Activated CD4-positive, alpha-beta memory T cell treated with anti-CD3 and anti-CD28 coated beads, Interleukin-2, amount 10 ng/mL, durations not matched to agents 7 days and 5 days (primary cell): ENCODE measurements at regions of chr3 and their contacts with region 1.

Region 1: DNA sequence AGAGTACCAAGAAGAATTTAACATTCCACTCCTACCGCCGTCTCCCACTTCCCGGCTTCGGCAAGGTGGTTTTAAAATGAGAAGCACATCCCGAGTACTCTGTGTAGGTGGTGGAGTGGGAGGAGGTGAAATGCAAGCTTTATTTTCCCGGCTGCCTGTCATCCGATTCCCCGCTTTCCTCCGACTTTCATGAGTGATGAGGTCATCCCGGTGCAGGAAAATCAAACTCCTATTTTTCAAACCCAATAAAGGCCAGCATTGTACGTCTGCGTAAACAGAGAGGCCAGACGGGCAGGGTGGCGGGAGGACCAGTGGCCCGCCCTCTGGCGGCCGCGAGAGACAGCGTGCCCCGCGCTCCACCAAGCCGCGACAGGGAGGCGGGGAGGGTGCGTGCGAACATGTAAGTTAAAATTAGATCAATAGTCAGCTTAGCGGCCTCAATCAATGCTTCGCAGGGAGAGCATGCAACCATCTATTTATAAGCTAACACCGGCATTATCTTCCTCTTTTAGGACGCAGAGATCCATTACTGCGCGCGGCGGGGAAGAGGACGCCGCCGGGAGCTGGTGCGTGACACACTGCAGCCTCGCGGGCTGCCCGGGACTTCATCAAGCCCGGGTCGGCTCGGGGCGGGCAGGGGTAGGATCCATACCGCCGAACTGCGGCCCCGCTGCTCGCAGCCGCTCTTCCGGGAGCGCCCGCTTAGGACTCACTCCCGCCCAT is 163.3 kb downstream of the CD47 start:
- DNase-seq: peak; percentile 74
- H3K4me3 Mint-ChIP-seq: peak overlapping the region; percentile 76
- H3K27ac Mint-ChIP-seq: no peak overlapping the region
- H3K4me1 Mint-ChIP-seq: peaks cover 11% of the 10 kb centered on the region
- H3K27me3 Mint-ChIP-seq: peaks cover 9% of the 10 kb centered on the region

Region 2: DNA sequence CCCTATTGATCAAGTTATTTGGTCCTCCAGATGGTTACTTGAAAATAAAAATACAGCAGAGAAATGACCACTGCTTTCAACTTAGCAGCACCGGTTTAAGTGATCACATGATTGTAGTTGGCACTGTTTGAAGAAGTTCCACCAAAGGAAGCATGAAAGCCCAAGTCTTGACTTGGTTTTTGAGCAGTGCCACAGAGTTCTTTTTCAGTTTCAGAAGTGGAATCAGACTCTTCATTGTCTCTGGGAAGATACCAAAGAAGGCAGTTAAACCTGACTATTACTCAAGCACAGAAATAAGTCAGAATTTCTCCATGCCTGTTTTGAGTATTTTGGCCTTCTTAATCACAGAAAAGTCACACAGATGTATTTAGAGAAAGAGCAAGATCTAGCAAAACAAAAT is 338.1 kb before region 1 on chr3:
- CTCF ChIA-PET with region 1: no interaction called
- POLR2A ChIA-PET with region 1: no interaction called
- DNase-seq: no peak
- H3K4me3 Mint-ChIP-seq: no peak overlapping the region
- H3K27ac Mint-ChIP-seq: no peak overlapping the region
- H3K4me1 Mint-ChIP-seq: peaks cover 9% of the 10 kb centered on the region
- H3K27me3 Mint-ChIP-seq: no peaks in the 10 kb centered on the region

Region 3: DNA sequence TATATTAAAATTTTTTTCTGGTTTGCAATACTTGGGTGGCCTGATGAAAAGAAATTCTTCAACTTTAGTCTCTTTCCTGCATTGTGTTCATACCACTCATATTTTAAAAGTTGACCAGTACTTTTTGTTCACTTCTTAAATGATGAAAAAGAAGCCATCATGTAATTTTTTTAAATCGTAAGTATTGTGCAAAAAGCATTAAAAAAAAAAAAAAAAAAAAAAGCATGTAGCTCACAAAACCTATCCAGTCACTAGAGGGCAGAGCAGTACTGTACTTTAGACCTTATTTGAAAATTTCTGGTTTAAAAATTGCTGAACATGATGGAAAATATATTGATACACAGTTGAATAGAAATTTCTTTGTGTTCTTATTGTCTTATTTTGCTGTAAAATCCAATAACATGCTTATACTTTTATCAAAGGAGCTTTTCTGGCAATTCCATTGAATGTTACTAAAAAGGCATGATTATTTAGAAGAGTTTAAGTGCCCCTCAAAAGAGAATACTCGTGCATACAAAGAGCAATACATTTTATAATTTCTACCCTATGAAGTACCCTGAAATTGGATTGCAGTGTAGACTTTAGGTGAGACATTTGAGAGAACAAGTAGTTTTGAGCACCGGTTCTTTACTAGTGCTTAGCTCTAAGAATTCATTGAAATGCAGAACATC is 267.1 kb before region 1 on chr3:
- CTCF ChIA-PET with region 1: interaction called, 15 read pairs
- POLR2A ChIA-PET with region 1: no interaction called
- DNase-seq: no peak
- H3K4me3 Mint-ChIP-seq: no peak overlapping the region
- H3K27ac Mint-ChIP-seq: no peak overlapping the region
- H3K4me1 Mint-ChIP-seq: peaks cover 16% of the 10 kb centered on the region
- H3K27me3 Mint-ChIP-seq: no peaks in the 10 kb centered on the region

Region 4: GRCh38 chr3:107816107-107816506 is 111.4 kb before region 1 on chr3:
- CTCF ChIA-PET with region 1: no interaction called
- POLR2A ChIA-PET with region 1: no interaction called
- DNase-seq: no peak
- H3K4me3 Mint-ChIP-seq: no peak overlapping the region
- H3K27ac Mint-ChIP-seq: no peak overlapping the region
- H3K4me1 Mint-ChIP-seq: peaks cover 2% of the 10 kb centered on the region
- H3K27me3 Mint-ChIP-seq: peaks cover 7% of the 10 kb centered on the region

Region 5: GRCh38 chr3:107884719-107885460 is 42.6 kb before region 1 on chr3:
- CTCF ChIA-PET with region 1: no interaction called
- POLR2A ChIA-PET with region 1: no interaction called
- DNase-seq: no peak
- H3K4me3 Mint-ChIP-seq: no peak overlapping the region
- H3K27ac Mint-ChIP-seq: no peak overlapping the region
- H3K4me1 Mint-ChIP-seq: no peaks in the 10 kb centered on the region
- H3K27me3 Mint-ChIP-seq: no peaks in the 10 kb centered on the region

Region 6: GRCh38 chr3:107938143-107938542 is 10.6 kb after region 1 on chr3:
- CTCF ChIA-PET with region 1: interaction called, 15 read pairs
- POLR2A ChIA-PET with region 1: interaction called, 6 read pairs
- DNase-seq: no peak
- H3K4me3 Mint-ChIP-seq: no peak overlapping the region
- H3K27ac Mint-ChIP-seq: no peak overlapping the region
- H3K4me1 Mint-ChIP-seq: peaks cover 18% of the 10 kb centered on the region
- H3K27me3 Mint-ChIP-seq: peaks cover 15% of the 10 kb centered on the region

Region 7: DNA sequence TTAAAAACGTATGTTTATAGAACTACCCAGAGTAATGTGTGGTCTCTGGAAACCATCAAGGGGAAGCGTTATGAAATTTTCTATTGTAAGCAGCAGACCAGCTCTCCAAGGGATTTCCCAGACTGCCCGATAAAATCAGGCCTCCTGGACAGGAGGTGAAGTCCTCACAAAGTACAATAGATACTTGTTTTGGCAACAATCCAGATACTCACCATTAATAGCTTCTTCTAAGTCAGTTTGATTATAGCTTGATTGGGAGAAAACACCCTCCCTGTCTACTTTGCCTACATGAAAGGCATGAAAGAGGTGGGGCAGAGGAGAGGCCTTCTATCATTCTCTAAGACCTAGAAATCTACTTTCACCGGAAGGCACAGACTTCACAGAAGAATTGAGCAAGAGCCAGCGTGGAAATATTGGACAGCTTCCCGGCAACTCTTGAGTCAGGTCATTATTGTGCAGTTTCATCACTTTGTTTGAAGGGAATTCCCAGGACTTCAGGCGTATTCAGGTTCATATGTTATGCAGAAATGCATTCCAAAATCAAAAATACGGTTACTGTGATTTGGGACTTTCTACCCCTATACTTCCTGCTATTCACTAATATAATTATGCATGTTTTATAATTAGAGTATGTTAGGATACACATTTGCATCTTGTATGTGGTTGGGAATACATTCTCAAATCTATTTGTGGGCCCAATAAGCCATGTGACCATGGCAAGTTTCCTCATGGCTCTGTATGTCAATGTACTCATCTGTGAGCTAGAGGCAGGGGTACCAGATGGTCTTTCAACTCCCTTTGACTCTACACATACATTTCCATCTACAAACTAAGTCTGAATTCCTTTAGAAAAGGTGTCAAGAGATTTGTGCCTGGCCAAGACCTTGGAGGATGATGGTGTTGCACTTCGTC is 59.8 kb after region 1 on chr3:
- CTCF ChIA-PET with region 1: interaction called, 18 read pairs
- POLR2A ChIA-PET with region 1: no interaction called
- DNase-seq: no peak
- H3K4me3 Mint-ChIP-seq: no peak overlapping the region
- H3K27ac Mint-ChIP-seq: peak overlapping the region; percentile 89
- H3K4me1 Mint-ChIP-seq: peaks cover 45% of the 10 kb centered on the region
- H3K27me3 Mint-ChIP-seq: no peaks in the 10 kb centered on the region

Region 8: DNA sequence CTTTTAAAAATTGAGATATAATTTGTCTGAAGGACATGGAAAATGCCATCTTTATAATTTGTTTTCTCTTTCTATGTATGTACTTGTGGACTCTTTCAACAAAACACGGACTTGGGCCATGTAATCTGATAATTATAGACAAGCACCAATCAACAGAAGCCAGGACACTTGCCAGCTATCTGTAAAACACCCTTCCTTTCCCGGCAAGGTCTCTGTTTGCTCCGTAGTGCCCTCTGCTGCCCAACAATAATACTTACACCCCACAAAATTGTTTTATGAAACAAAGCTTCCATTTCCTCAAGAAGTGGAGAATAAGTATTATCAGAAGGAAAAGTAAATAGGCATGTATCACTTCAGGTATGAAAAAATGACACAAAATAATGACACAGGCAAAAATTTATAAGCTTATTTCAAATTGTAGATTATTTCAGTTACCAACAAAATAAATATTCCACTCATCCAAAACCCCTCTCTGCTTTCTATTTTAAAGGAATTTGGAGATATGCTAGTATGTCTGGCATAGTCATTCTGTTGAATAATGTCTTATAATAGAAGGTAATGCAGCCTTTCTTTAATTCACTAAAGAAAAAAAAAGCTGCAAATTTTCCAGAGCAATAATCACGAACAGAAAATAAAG is 550.1 kb after region 1 on chr3:
- CTCF ChIA-PET with region 1: interaction called, 19 read pairs
- POLR2A ChIA-PET with region 1: no interaction called
- DNase-seq: peak; percentile 64
- H3K4me3 Mint-ChIP-seq: no peak overlapping the region
- H3K27ac Mint-ChIP-seq: no peak overlapping the region
- H3K4me1 Mint-ChIP-seq: peaks cover 3% of the 10 kb centered on the region
- H3K27me3 Mint-ChIP-seq: peaks cover 6% of the 10 kb centered on the region